ENCODE measurements at regions of chr19 and their contacts with region 1.

Region 1: GRCh38 chr19:5340637-5341447 is at the start of gene PTPRS:
- DNase-seq: peak; percentile 69
- H3K4me3 ChIP-seq: peak within 1 kb of the TSS; percentile 54 to 57 (median 54)
- H3K27ac ChIP-seq: no peak within 1 kb of the TSS
- H3K4me1 ChIP-seq: peaks cover 12% of the 10 kb centered on the region
- H3K27me3 ChIP-seq: peaks cover 11% of the 10 kb centered on the region
- CTCF ChIP-seq: no peak
- total RNA-seq, gene PTPRS: 32.2 to 93.4 TPM

Region 2: DNA sequence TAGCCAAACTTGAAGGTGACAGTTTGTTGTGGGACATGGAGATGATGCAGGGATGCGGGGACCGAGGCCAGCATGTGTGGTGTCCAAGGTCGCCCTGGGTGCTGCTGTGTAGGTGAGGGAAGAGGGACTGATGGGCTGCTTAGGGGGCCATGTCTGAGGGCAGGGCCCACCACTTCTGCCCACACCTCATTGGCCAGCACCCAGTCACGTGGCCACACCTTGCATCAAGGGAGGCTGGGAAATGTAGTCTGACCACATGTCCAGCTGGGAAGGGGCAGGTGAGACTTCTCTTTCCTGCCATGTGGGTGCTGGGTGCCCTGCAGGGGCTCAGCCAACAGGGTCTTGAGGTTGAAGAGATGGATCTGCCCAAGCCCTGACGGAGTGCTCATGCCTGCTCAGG is 283.0 kb before region 1 on chr19:
- CTCF ChIA-PET with region 1: no interaction called
- dilution Hi-C with region 1: loop called (anchors 10 kb)
- in situ Hi-C with region 1: no loop called
- intact Hi-C with region 1: no loop called
- DNase-seq: peak; percentile 12
- H3K4me3 ChIP-seq: no peak overlapping the region
- H3K27ac ChIP-seq: no peak overlapping the region
- H3K4me1 ChIP-seq: peaks cover 12% of the 10 kb centered on the region
- H3K27me3 ChIP-seq: no peaks in the 10 kb centered on the region
- CTCF ChIP-seq: no peak

Region 3: DNA sequence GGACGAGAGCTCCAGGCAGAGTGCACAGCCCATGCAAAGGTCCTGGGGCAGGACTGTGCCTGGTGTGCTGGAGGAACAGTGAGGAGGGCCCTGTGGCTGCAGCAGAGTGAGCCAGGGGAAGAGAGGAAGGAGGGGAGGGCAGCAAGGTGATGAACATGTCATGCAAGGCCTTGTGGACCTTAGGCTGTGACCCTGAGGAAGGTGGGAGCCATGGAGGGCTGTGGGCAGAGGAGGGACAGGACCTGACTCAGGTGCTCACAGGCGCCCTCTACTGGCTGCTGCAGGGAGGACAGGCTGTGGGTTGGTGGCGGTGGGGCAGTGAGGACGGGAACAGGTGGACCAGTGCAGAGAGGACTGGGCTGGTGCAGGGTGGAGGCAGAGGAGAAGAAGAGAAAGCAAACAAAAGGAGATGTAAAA is 170.5 kb before region 1 on chr19:
- CTCF ChIA-PET with region 1: no interaction called
- dilution Hi-C with region 1: no loop called
- in situ Hi-C with region 1: no loop called
- intact Hi-C with region 1: loop called (anchors 1 kb)
- DNase-seq: no peak
- H3K4me3 ChIP-seq: no peak overlapping the region
- H3K27ac ChIP-seq: no peak overlapping the region
- H3K4me1 ChIP-seq: no peaks in the 10 kb centered on the region
- H3K27me3 ChIP-seq: no peaks in the 10 kb centered on the region
- CTCF ChIP-seq: peak; percentile 32 to 57

Region 4: GRCh38 chr19:5205381-5205780 is 135.5 kb before region 1 on chr19:
- CTCF ChIA-PET with region 1: no interaction called
- dilution Hi-C with region 1: loop called (anchors 5 kb)
- in situ Hi-C with region 1: no loop called
- intact Hi-C with region 1: no loop called
- DNase-seq: no peak
- H3K4me3 ChIP-seq: no peak overlapping the region
- H3K27ac ChIP-seq: no peak overlapping the region
- H3K4me1 ChIP-seq: no peaks in the 10 kb centered on the region
- H3K27me3 ChIP-seq: no peaks in the 10 kb centered on the region
- CTCF ChIP-seq: no peak

Region 5: DNA sequence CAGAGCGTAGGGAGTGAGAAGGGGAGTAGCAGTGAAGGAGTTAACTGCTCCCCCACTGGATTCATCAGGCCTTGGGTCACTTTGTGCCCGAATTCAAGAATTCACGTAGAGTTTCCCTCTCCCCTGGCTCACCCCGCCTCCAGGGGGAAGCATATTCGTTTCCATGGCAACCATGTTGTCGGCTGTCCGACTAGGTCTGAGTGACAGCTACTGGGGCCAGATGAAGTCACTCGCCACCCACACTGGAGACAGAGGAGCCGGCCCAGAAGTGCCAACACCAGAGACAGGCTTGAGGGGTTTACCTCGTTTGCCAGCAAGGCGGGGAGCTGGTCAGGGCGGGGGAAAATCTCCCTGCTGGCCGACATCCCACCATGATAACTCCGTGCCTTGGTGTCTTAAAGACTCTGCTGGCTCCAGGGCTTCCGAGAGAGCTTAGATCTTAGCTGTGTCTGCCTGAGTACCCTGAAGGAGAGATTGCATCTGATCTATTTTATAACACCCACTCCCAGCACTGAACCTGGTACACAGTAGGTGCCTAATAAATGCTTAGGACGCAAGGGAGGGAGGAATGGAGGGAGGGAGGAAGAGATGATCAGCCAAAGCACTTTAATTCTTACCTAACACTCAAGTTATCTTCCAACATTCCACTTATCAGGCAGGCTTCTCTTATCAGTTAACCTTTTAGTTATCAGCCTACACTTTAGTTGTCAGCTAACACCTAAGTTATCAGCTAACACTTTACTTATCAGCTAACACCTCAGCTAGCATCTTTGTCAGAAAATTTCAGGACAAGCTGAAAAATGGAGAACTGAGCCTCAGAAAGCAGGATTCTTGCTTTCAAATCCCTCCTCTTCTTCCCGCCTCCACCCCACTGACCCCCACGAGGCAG is 57.2 kb after region 1 on chr19:
- CTCF ChIA-PET with region 1: no interaction called
- dilution Hi-C with region 1: loop called (anchors 5 kb)
- in situ Hi-C with region 1: no loop called
- intact Hi-C with region 1: no loop called
- DNase-seq: no peak
- H3K4me3 ChIP-seq: no peak overlapping the region
- H3K27ac ChIP-seq: no peak overlapping the region
- H3K4me1 ChIP-seq: no peaks in the 10 kb centered on the region
- H3K27me3 ChIP-seq: no peaks in the 10 kb centered on the region
- CTCF ChIP-seq: no peak